ENCODE measurements at regions of chr16 and their contacts with region 1.

Region 1: DNA sequence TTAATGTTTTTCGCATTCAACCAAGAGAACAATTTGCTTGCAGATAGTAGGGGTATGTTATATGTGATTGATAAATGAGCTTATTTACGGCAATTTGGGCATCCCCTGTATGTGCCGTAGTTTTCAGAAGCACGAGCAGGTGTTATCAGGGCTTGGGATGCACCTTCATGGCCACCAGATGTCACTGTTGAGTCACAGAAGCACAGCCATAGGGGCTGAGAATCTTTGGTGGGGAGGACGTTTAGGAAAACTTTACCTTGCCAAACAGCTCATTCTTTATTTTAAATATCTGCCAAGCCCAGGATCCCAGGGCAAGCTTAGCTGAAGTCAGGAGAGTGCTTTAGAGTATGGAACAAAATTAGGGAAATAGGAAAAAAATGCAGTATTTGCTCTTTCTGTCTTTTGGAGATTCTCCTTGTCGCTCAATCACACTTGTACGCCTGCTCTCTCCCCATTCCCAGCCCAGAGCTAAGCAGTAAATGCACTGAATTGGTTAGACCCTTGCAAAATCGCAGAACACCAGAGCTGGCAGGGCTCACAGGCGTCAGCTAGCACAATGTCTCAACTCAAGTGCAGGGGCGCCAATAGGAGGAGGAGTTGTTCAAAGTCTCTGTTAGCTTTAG is 93.6 kb upstream of the MPHOSPH6 start:
- DNase-seq: peak; percentile 68
- ATAC-seq: peak; percentile 79
- H3K4me3 Mint-ChIP-seq: no peak overlapping the region
- H3K27ac Mint-ChIP-seq: no peak overlapping the region
- H3K4me1 Mint-ChIP-seq: no peaks in the 10 kb centered on the region
- H3K27me3 Mint-ChIP-seq: peaks cover 21% of the 10 kb centered on the region
- CTCF ChIP-seq: peak; percentile 91

Region 2: DNA sequence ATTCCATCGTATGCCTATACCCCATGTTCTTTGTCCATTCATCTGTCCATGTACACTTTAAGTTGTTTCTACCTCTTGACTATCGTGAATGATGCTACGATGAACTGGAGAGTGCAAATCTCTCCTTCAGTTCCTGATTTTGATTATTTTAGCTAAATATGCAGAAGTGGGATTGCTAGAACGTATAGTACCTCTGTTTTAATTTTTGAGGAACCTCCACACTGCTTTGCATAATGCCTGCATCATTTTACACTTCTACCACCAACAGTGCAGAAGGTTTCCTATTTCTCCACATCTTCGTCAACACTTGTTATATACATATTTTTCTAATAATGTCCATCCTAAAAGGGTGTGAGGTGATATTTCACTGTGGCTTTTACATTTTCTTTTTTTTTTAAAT is 296.3 kb before region 1 on chr16:
- CTCF ChIA-PET with region 1: no interaction called
- POLR2A ChIA-PET with region 1: no interaction called
- intact Hi-C with region 1: no loop called
- DNase-seq: no peak
- ATAC-seq: no peak
- H3K4me3 Mint-ChIP-seq: no peak overlapping the region
- H3K27ac Mint-ChIP-seq: no peak overlapping the region
- H3K4me1 Mint-ChIP-seq: no peaks in the 10 kb centered on the region
- H3K27me3 Mint-ChIP-seq: peaks cover 5% of the 10 kb centered on the region
- CTCF ChIP-seq: no peak

Region 3: DNA sequence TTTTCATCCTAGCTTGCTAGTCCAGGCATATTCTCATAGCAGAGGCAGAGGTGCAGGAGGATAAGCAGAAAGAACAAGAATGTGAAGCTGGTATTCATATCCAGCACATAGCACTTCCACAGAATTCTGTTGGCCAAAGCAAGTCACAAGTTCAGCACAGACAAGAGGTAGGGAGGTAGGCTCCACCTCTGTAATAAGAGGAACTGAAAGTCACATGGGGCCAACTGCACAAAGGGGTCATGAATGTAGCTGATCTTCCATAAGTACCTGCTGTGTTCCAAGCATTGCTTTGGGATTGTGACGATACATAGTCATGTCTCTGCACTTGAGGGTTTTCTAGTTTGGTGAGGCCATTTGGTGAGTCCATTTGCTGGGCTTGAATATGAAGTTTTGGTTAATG is 17.2 kb after region 1 on chr16:
- CTCF ChIA-PET with region 1: interaction called, 16 read pairs
- POLR2A ChIA-PET with region 1: interaction called, 3 read pairs
- intact Hi-C with region 1: no loop called
- DNase-seq: no peak
- ATAC-seq: no peak
- H3K4me3 Mint-ChIP-seq: no peak overlapping the region
- H3K27ac Mint-ChIP-seq: no peak overlapping the region
- H3K4me1 Mint-ChIP-seq: no peaks in the 10 kb centered on the region
- H3K27me3 Mint-ChIP-seq: no peaks in the 10 kb centered on the region
- CTCF ChIP-seq: no peak

Region 4: DNA sequence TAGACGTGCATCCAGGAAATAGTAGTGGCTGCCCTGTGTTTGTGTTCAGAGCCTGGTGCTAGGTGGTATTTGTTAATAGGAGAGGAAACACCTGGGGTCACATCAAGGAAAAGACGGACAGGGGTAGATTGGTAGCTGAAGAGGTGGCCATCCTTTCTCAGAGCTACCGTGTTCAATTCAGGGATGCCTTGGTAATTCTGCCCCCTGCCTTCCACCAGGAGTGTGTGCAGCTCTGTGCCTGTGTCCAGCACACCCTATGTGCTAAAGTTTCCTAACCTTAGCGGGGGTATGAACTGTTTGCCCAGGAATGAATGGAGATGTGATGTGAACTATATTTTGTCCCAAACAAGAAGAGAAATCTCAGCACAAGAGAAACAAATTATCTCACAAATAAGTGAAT is 80.5 kb after region 1 on chr16:
- CTCF ChIA-PET with region 1: interaction called, 16 read pairs
- POLR2A ChIA-PET with region 1: no interaction called
- intact Hi-C with region 1: no loop called
- DNase-seq: no peak
- ATAC-seq: no peak
- H3K4me3 Mint-ChIP-seq: no peak overlapping the region
- H3K27ac Mint-ChIP-seq: no peak overlapping the region
- H3K4me1 Mint-ChIP-seq: no peaks in the 10 kb centered on the region
- H3K27me3 Mint-ChIP-seq: peaks cover 15% of the 10 kb centered on the region
- CTCF ChIP-seq: no peak

Region 5: GRCh38 chr16:82639666-82640336 is 376.2 kb after region 1 on chr16:
- CTCF ChIA-PET with region 1: interaction called, 14 read pairs
- POLR2A ChIA-PET with region 1: no interaction called
- intact Hi-C with region 1: loop called (anchors 10 kb)
- DNase-seq: peak; percentile 78
- ATAC-seq: peak; percentile 69
- H3K4me3 Mint-ChIP-seq: no peak overlapping the region
- H3K27ac Mint-ChIP-seq: no peak overlapping the region
- H3K4me1 Mint-ChIP-seq: peaks cover 15% of the 10 kb centered on the region
- H3K27me3 Mint-ChIP-seq: peaks cover 6% of the 10 kb centered on the region
- CTCF ChIP-seq: peak; percentile 82